ENCODE measurements at regions of chr9 and their contacts with region 1.

Region 1: GRCh38 chr9:96449845-96450612 is at the start of gene HABP4:
- DNase-seq: peak; percentile 95

Region 2: DNA sequence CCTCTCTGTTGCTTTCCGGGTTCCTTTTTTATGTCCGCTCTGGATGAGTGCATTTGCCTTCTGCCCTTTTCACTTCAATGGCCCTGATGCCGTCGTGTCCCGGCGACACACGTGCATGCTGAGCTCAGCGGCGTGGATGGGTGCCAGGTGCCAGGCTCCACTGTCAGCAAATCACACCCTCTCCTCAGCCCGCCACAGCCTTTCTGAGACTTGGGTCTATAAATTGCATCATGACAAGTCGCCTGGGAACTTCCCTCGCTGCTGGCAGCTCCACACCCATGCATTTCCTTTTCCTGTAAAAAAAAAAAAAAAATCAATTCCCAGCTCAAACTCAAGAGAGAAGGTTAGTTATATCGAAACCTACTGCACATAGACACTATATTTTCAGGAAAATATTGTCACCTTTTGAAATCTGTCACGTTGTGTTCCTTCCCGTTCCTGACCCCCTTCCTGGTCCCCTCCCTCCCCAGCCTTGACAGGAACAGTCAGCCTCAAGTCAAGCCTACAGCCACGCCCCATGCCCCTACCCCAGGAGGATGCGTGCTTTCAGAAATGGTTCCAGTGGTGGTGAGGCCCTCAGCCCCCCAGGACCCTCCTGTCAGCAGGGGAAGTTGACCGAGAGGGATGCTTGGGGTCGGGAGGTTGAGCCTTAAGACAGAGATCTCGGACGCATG is 823.0 kb before region 1 on chr9:
- in situ Hi-C with region 1: no loop called
- DNase-seq: peak; percentile 14

Region 3: DNA sequence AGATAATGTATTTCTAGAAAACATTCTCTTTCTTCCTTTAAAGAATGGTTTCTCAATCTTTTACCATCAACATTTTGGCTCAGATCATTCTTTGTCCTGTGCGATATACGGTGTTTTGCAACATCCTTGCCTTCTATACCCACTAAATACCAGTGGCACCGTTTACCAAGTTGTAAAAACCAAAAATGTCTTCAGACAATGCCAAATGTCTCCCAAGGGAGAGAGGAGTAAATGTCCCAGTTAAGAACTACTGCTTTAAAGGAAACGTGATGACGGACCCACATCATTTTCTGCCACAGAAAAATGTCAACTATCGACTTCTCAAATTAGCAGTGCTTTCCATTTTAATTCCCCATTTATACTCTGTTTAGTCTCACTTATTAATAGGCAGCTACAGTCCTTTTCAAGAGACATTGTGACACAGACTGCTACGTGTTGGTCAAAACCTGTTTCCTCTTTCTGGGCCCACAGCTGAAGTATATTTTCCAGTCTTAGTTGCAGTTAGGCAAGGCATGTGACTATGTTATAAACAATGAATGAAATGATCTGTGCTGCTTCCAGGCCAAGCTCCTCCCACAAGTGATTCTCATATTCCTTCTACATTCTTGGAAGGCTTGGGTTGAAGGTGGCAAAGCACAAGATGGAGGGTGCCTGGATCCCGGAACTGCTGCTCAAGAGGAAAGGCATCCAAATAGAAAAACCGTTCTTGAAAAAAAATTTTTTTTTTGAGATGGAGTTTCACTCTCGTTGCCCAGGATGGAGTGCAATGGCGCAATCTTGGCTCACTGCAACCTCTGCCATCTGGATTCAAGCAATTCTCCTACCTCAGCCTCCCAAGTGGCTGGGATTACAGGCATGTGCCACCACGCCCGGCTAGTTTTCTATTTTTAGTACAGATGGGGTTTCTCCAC is 196.3 kb after region 1 on chr9:
- in situ Hi-C with region 1: loop called (anchors 25 kb)
- DNase-seq: peak; percentile 73

Region 4: GRCh38 chr9:96777426-96777864 is 327.4 kb after region 1 on chr9:
- in situ Hi-C with region 1: no loop called
- DNase-seq: no peak

Measured in KBM-7 (cell line).